ENCODE measurements at regions of chr10 and their contacts with region 1.

Region 1: GRCh38 chr10:80662577-80663261 is 125.0 kb downstream of the SH2D4B start:
- DNase-seq: peak; percentile 81
- ATAC-seq: peak; percentile 89
- H3K4me3 Mint-ChIP-seq: peak overlapping the region; percentile 44
- H3K27ac Mint-ChIP-seq: no peak overlapping the region
- H3K4me1 Mint-ChIP-seq: peaks cover 3% of the 10 kb centered on the region
- H3K27me3 Mint-ChIP-seq: peaks cover 21% of the 10 kb centered on the region
- CTCF ChIP-seq: peak; percentile 98

Region 2: DNA sequence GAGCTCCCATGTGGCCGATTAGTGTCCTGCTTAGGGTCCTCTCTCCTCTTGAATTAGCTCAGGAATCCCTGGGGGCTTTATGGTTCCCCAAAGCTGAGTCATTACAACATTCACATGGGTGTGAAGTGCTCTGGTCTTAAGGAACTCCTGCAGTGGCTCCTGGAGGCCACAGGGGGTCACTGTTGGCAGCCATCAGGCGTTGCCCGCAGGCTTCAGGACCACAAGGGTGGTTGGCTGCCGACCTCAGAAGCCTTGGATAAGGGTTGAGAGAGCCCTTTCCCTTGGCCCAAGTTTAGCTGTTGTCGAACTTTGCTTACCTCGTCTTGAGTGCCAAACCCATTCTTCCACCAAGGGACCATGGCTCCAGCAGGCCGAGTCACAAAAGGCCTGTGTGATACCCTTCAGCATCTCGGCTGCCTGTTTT is 63.3 kb before region 1 on chr10:
- CTCF ChIA-PET with region 1: interaction called, 17 read pairs
- POLR2A ChIA-PET with region 1: no interaction called
- intact Hi-C with region 1: no loop called
- DNase-seq: peak; percentile 58
- ATAC-seq: peak; percentile 90
- H3K4me3 Mint-ChIP-seq: no peak overlapping the region
- H3K27ac Mint-ChIP-seq: no peak overlapping the region
- H3K4me1 Mint-ChIP-seq: no peaks in the 10 kb centered on the region
- H3K27me3 Mint-ChIP-seq: no peaks in the 10 kb centered on the region
- CTCF ChIP-seq: peak; percentile 63

Region 3: GRCh38 chr10:80632742-80633141 is 30.0 kb before region 1 on chr10:
- CTCF ChIA-PET with region 1: interaction called, 15 read pairs
- POLR2A ChIA-PET with region 1: no interaction called
- intact Hi-C with region 1: no loop called
- DNase-seq: no peak
- ATAC-seq: no peak
- H3K4me3 Mint-ChIP-seq: no peak overlapping the region
- H3K27ac Mint-ChIP-seq: no peak overlapping the region
- H3K4me1 Mint-ChIP-seq: no peaks in the 10 kb centered on the region
- H3K27me3 Mint-ChIP-seq: no peaks in the 10 kb centered on the region
- CTCF ChIP-seq: no peak

Region 4: DNA sequence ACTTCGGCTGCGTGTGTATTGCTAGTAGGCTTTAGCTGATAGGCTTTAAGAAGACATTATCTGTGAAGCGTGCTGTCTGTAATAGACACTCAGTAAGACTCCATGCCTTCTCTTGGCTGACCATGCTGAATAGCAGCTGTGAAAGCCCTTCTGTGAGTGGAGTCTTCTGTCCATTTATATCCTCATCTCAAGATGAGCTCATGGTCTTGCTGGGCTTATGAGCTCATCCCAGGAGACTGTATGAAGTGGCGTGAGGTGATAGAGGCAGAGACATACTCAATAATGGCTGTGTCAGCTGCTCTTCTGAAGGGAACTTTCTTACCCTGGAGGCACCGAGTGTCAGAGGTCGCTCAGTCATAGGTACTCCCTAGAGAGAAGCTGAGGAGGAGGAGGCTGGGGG is 13.5 kb before region 1 on chr10:
- CTCF ChIA-PET with region 1: interaction called, 45 read pairs
- POLR2A ChIA-PET with region 1: interaction called, 4 read pairs
- intact Hi-C with region 1: no loop called
- DNase-seq: no peak
- ATAC-seq: no peak
- H3K4me3 Mint-ChIP-seq: no peak overlapping the region
- H3K27ac Mint-ChIP-seq: no peak overlapping the region
- H3K4me1 Mint-ChIP-seq: no peaks in the 10 kb centered on the region
- H3K27me3 Mint-ChIP-seq: peaks cover 11% of the 10 kb centered on the region
- CTCF ChIP-seq: no peak

Region 5: DNA sequence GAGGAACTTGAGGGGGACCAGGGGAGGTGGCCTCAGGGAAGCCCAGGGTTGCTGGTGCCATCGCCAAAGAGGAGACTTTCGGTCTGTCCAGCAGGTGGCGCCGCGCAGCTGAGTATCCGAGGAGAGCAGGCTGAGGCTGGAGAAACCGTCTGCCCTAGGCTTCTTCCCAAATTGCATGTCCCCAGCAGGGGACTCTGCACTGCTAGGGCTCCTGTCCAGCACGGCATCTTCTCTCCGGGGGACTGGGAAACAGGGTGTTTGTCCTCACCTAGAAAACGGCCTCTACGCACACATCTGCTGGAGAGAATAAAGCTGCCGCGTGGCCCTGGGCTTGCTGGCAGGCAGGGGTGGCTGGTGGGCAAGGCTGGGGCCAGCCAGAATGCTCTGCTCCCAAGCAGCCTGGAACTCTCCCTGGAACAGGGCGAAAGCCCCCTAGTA is 36.9 kb after region 1 on chr10:
- CTCF ChIA-PET with region 1: interaction called, 29 read pairs
- POLR2A ChIA-PET with region 1: no interaction called
- intact Hi-C with region 1: no loop called
- DNase-seq: peak; percentile 85
- ATAC-seq: peak; percentile 86
- H3K4me3 Mint-ChIP-seq: no peak overlapping the region
- H3K27ac Mint-ChIP-seq: no peak overlapping the region
- H3K4me1 Mint-ChIP-seq: no peaks in the 10 kb centered on the region
- H3K27me3 Mint-ChIP-seq: peaks cover 4% of the 10 kb centered on the region
- CTCF ChIP-seq: peak; percentile 85

Region 6: GRCh38 chr10:81179805-81180452 is 517.2 kb after region 1 on chr10:
- CTCF ChIA-PET with region 1: interaction called, 15 read pairs
- POLR2A ChIA-PET with region 1: no interaction called
- intact Hi-C with region 1: no loop called
- DNase-seq: no peak
- ATAC-seq: no peak
- H3K4me3 Mint-ChIP-seq: no peak overlapping the region
- H3K27ac Mint-ChIP-seq: no peak overlapping the region
- H3K4me1 Mint-ChIP-seq: no peaks in the 10 kb centered on the region
- H3K27me3 Mint-ChIP-seq: no peaks in the 10 kb centered on the region
- CTCF ChIP-seq: peak; percentile 37